Ascending aorta (tissue), 2 donors: ENCODE measurements at regions of chr1 and their contacts with region 1.

Region 1: GRCh38 chr1:42747125-42747524 is 7.1 kb upstream of the CLDN19 start:
- DNase-seq: no peak
- H3K4me3 ChIP-seq: no peak overlapping the region
- H3K27ac ChIP-seq: no peak overlapping the region
- H3K4me1 ChIP-seq: no peaks in the 10 kb centered on the region
- H3K27me3 ChIP-seq: no peaks in the 10 kb centered on the region
- CTCF ChIP-seq: peak in 2 of 3 experiments; percentile 38 to 48

Region 2: GRCh38 chr1:42576935-42577334 is 170.2 kb before region 1 on chr1:
- intact Hi-C with region 1: loop called (anchors 5 kb)
- DNase-seq: no peak
- H3K4me3 ChIP-seq: no peak overlapping the region
- H3K27ac ChIP-seq: no peak overlapping the region
- H3K4me1 ChIP-seq: no peaks in the 10 kb centered on the region
- H3K27me3 ChIP-seq: no peaks in the 10 kb centered on the region
- CTCF ChIP-seq: no peak

Region 3: DNA sequence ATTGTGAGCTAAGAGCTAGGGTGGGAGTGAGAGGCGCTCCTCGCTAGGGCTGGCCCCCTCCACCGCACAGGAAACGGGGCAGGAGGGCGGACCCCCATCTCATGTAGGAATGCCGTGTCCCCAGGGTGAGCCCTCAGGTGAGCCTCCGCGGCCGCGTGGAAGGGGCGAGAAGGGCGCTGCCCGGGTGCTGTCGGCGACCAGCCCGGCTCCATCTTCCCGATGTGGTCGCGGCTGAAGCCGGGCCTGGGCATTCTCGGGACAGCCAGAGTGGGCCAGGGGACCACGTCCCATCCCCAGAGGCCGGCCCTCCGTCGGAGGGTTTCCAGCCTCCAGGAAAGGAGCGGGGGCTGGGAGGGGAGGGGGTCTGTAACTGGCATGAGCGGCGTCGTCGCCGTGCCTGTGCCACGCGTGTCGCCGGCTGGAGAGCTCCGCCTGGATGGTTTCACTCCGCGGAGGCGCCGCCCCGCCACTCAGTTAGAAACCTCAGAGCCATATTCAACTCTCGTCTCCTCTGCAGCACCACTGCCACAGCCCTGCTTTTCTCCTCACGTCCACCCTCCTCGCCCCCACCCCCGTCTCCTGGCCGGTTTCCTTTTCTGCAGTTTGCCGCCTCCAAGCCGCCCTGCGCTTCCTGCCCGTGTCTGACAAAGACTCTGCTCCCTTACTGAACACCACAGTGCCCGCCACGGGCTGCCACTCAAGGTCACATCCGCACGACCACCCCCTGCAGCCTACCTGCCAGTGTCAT is 38.0 kb after region 1 on chr1 and contains the start of gene TMEM269:
- intact Hi-C with region 1: no loop called
- DNase-seq: peak in 1 of 2 donors; percentile 64
- H3K4me3 ChIP-seq: peak within 1 kb of the TSS; percentile 42 to 65
- H3K27ac ChIP-seq: no peak within 1 kb of the TSS
- H3K4me1 ChIP-seq: peaks cover 0 to 3% of the 10 kb centered on the region in 2 donors
- H3K27me3 ChIP-seq: no peaks in the 10 kb centered on the region
- CTCF ChIP-seq: no peak
- total RNA-seq, gene TMEM269: not detected